Caco-2 (cell line): ENCODE measurements at regions of chr13 and their contacts with region 1.

Region 1: GRCh38 chr13:64446372-64446771 is 2783.8 kb downstream of the PCDH9 start:
- DNase-seq: peak in 1 of 2 experiments; percentile 24
- H3K4me3 ChIP-seq: no peak overlapping the region
- H3K4me3 Mint-ChIP-seq: no peak overlapping the region
- H3K27ac Mint-ChIP-seq: no peak overlapping the region
- H3K4me1 ChIP-seq: no peaks in the 10 kb centered on the region
- H3K4me1 Mint-ChIP-seq: no peaks in the 10 kb centered on the region
- H3K27me3 ChIP-seq: no peaks in the 10 kb centered on the region
- H3K27me3 Mint-ChIP-seq: no peaks in the 10 kb centered on the region
- CTCF ChIP-seq: peak; percentile 65 to 76

Region 2: GRCh38 chr13:64154514-64154913 is 291.9 kb before region 1 on chr13:
- CTCF ChIA-PET with region 1: no interaction called
- POLR2A ChIA-PET with region 1: no interaction called
- intact Hi-C with region 1: loop called (anchors 5 kb)
- DNase-seq: peak in 1 of 2 experiments; percentile 4
- H3K4me3 ChIP-seq: no peak overlapping the region
- H3K4me3 Mint-ChIP-seq: no peak overlapping the region
- H3K27ac Mint-ChIP-seq: no peak overlapping the region
- H3K4me1 ChIP-seq: no peaks in the 10 kb centered on the region
- H3K4me1 Mint-ChIP-seq: no peaks in the 10 kb centered on the region
- H3K27me3 ChIP-seq: no peaks in the 10 kb centered on the region
- H3K27me3 Mint-ChIP-seq: no peaks in the 10 kb centered on the region
- CTCF ChIP-seq: peak; percentile 14 to 43

Region 3: DNA sequence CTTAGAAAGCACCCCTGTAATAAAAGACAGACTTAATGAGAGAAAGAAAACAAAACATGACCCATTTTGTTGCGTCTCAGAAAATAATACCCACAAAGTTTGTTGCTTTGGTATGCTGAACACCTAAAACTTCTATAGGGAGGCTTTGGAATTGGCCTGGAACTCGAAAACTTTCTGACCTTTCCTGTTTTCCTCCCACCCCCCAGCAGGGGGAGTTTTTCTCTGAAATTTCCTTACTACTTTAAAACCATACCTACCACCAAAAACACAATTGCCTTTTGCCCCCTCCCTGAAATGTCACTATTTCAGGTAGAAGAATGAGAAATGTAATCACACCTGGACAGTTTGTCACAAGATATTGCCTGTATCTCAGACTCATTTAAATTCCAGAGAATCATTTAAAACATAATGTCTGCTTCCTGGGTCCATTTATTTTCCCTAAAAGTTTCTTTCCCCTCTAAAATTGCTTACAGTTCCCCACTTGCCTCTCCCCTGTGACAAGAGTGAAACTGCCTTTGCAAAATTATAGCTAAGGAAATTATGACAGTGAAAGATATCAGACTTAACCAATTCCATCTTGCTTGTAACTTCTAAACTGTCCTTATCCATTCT is 83.6 kb after region 1 on chr13:
- CTCF ChIA-PET with region 1: no interaction called
- POLR2A ChIA-PET with region 1: no interaction called
- intact Hi-C with region 1: no loop called
- DNase-seq: peak in 1 of 2 experiments; percentile 45
- H3K4me3 ChIP-seq: no peak overlapping the region
- H3K4me3 Mint-ChIP-seq: no peak overlapping the region
- H3K27ac Mint-ChIP-seq: no peak overlapping the region
- H3K4me1 ChIP-seq: no peaks in the 10 kb centered on the region
- H3K4me1 Mint-ChIP-seq: no peaks in the 10 kb centered on the region
- H3K27me3 ChIP-seq: no peaks in the 10 kb centered on the region
- H3K27me3 Mint-ChIP-seq: no peaks in the 10 kb centered on the region
- CTCF ChIP-seq: peak; percentile 53 to 57